OCI-LY7 (cell line): ENCODE measurements at regions of chr3 and their contacts with region 1.

Region 1: GRCh38 chr3:50611464-50612233 is at the start of gene CISH:
- DNase-seq: peak; percentile 78
- H3K4me3 ChIP-seq: peak within 1 kb of the TSS; percentile 68
- H3K27ac ChIP-seq: no peak within 1 kb of the TSS
- H3K4me1 ChIP-seq: peaks cover 7% of the 10 kb centered on the region
- CTCF ChIP-seq: peak; percentile 72
- total RNA-seq, gene CISH: 0.05 TPM in 1 of 2 replicates, not detected in the other

Region 2: GRCh38 chr3:50436114-50436674 is 175.5 kb before region 1 on chr3:
- CTCF ChIA-PET with region 1: no interaction called
- POLR2A ChIA-PET with region 1: no interaction called
- intact Hi-C with region 1: loop called (anchors 1 kb)
- DNase-seq: peak; percentile 62
- H3K4me3 ChIP-seq: no peak overlapping the region
- H3K27ac ChIP-seq: no peak overlapping the region
- H3K4me1 ChIP-seq: no peaks in the 10 kb centered on the region
- CTCF ChIP-seq: peak; percentile 90

Region 3: DNA sequence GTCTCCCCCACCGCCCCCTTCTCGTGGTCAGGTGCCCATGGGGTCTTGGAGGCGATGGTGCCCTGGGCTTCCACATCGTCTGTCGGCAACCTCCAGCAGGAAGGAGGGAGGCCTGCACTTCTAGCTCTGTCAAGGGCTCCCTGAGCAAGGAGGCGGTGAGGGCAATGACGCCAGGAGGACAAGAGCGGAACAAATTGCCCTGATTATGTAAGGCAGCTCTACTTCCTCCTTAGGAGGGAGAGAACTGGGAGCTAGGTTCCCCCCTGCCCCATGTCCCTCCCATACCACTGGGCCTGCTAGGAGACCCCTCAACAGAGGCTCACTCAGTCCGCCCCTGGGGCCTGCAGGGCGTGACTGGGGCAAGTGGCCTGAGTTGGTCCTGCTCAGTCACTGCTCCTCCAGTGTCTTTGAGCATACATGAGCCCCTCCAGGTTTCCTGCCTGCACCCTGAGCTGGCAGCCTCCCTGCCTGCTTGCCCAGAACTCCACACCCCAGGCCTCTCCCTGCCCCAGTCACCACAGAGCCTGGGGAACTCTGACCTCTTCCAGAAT is 164.3 kb before region 1 on chr3:
- CTCF ChIA-PET with region 1: no interaction called
- POLR2A ChIA-PET with region 1: no interaction called
- intact Hi-C with region 1: no loop called
- DNase-seq: no peak
- H3K4me3 ChIP-seq: no peak overlapping the region
- H3K27ac ChIP-seq: no peak overlapping the region
- H3K4me1 ChIP-seq: no peaks in the 10 kb centered on the region
- CTCF ChIP-seq: no peak

Region 4: DNA sequence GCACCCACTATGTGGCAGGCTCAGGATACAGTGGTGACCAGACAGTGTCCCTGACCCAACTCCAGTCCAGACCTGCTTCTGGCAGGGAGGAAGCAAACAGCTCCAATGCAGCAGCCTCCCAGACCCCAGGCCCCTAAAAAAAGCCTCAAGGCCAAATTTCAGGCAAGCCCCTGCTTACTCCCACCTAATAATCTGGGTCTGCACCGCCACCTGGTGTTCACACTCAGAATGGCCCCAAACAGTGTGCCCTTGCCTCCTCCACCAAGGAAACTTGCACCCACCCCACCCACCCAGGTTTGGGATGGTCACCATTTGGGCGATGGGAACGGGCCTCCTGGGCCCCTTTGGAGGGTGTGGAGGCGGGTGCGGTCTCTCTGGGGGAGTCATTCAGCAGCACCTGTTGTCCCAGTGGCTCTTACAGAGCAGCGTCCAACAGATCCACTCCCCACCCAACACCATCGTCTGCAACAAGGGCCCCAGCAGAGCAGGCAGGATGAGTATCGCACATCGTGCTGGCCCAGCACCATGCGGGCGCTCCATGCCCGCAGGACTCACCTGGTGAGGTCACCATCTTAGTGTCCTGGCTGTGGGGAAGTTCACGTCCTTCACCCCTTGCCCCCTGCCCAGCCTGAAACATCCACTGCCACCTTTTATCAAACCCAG is 61.4 kb before region 1 on chr3:
- CTCF ChIA-PET with region 1: no interaction called
- POLR2A ChIA-PET with region 1: no interaction called
- intact Hi-C with region 1: loop called (anchors 5 kb)
- DNase-seq: peak; percentile 59
- H3K4me3 ChIP-seq: no peak overlapping the region
- H3K27ac ChIP-seq: no peak overlapping the region
- H3K4me1 ChIP-seq: no peaks in the 10 kb centered on the region
- CTCF ChIP-seq: peak; percentile 76

Region 5: DNA sequence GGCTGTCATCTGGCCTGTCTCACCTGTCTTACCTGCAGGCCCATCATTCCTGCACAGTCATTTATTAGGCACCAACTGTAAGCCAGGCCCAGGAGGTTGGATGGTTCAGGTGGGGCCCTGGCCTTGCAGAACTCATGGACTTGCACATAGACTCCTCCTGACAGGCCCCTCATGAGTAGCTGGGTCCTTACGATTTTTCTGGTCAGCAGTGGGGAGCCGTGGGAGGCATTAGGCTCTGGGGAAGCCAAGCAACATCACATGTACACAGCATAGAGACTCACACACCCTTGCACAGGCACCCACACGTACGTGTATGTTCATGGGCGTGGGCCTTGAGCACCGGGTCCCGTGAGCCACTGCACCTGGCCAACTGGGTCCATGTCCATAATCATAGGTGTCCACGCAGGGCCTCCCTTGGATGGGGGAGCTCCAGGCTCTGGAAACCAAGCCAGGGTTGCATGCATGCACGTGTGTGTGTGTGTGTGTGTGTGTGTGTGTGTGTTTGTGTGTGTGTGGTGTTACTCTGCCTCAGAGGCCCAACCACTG is 20.4 kb before region 1 on chr3:
- CTCF ChIA-PET with region 1: no interaction called
- POLR2A ChIA-PET with region 1: no interaction called
- intact Hi-C with region 1: loop called (anchors 2 kb)
- DNase-seq: no peak
- H3K4me3 ChIP-seq: no peak overlapping the region
- H3K27ac ChIP-seq: no peak overlapping the region
- H3K4me1 ChIP-seq: peaks cover 10% of the 10 kb centered on the region
- CTCF ChIP-seq: peak; percentile 13; the same call in 1 of the 2 replicates

Region 6: DNA sequence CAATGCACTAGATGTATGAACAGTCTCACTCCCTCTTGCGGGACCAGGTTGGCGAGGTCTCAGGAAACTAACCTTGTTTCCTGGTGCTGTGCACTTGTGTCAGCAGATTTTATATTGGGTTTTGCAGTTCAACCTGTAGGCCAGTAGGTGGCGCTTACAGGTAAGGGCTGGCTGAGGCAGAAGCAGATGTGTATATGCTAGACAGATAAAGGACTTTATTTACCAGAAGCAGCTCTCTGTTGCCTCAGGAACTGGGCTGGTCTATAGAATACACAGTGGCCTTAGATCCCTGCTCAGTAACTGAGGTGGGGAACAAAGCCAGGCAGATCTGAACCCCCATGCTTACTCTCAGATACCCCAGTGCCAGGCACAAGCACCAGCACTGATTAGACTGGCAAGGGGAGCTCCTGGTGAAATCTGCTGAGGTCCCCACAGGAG is 359.9 kb after region 1 on chr3:
- CTCF ChIA-PET with region 1: no interaction called
- POLR2A ChIA-PET with region 1: no interaction called
- intact Hi-C with region 1: loop called (anchors 10 kb)
- DNase-seq: peak; percentile 68
- H3K4me3 ChIP-seq: no peak overlapping the region
- H3K27ac ChIP-seq: no peak overlapping the region
- H3K4me1 ChIP-seq: no peaks in the 10 kb centered on the region
- CTCF ChIP-seq: peak; percentile 96

Region 7: DNA sequence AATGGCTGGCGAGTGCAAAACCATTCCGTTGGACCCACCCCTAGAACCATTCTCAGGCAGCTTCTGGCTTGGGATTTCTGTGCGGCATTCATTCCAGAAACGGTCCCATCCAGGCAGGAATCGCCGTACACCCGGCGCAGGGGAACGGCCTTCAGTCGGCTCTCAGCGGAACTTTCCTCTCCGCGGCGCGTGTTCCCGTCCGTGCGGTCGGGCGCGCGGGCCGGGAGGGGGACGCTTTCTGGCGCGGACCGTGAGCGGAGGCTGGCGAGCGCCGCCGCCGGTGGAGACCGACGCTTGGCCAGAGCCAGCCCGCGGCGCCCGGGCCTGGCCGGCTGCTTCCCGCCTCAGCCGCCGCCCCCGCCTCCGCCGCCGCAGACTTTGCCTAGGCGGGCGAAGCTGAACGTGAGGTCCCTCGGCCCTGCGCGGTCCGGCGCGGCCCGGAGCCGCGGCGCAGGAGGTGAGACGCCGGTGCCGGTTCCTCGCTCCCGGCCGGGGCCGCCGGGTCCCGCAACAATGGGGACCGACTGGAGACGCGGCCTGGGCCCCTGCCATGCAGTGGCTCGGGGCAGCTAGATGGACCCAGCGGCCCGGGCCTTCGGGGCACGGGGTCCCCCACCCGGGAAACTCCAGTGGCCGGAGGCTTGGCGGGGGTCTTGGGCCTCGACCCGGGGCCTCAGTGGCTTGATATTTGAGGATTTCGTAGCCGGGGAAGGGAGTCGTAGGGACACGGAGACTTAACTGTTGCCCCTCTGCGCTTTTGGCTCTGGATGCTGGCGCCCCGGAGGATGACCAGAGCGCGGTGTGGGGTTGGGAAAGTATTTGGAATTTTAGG is 927.0 kb after region 1 on chr3 and contains the start of gene RAD54L2:
- CTCF ChIA-PET with region 1: no interaction called
- POLR2A ChIA-PET with region 1: no interaction called
- intact Hi-C with region 1: loop called (anchors 2 kb)
- DNase-seq: peak; percentile 87
- H3K4me3 ChIP-seq: peak within 1 kb of the TSS; percentile 94
- H3K27ac ChIP-seq: peak within 1 kb of the TSS; percentile 13
- H3K4me1 ChIP-seq: peaks cover 14% of the 10 kb centered on the region
- CTCF ChIP-seq: peak; percentile 58
- total RNA-seq, gene RAD54L2: 15.0 and 20.5 TPM in 2 replicates